ENCODE measurements at regions of chr11 and their contacts with region 1.

Region 1: GRCh38 chr11:59263225-59263894 is 50.6 kb upstream of the MPEG1 start:
- DNase-seq: peak; percentile 49 to 54
- H3K4me3 ChIP-seq: no peak overlapping the region
- H3K4me3 Mint-ChIP-seq: no peak overlapping the region
- H3K27ac Mint-ChIP-seq: no peak overlapping the region
- H3K4me1 ChIP-seq: no peaks in the 10 kb centered on the region
- H3K4me1 Mint-ChIP-seq: no peaks in the 10 kb centered on the region
- H3K27me3 ChIP-seq: no peaks in the 10 kb centered on the region
- H3K27me3 Mint-ChIP-seq: peaks cover 3% of the 10 kb centered on the region
- CTCF ChIP-seq: peak; percentile 51 to 70

Region 2: DNA sequence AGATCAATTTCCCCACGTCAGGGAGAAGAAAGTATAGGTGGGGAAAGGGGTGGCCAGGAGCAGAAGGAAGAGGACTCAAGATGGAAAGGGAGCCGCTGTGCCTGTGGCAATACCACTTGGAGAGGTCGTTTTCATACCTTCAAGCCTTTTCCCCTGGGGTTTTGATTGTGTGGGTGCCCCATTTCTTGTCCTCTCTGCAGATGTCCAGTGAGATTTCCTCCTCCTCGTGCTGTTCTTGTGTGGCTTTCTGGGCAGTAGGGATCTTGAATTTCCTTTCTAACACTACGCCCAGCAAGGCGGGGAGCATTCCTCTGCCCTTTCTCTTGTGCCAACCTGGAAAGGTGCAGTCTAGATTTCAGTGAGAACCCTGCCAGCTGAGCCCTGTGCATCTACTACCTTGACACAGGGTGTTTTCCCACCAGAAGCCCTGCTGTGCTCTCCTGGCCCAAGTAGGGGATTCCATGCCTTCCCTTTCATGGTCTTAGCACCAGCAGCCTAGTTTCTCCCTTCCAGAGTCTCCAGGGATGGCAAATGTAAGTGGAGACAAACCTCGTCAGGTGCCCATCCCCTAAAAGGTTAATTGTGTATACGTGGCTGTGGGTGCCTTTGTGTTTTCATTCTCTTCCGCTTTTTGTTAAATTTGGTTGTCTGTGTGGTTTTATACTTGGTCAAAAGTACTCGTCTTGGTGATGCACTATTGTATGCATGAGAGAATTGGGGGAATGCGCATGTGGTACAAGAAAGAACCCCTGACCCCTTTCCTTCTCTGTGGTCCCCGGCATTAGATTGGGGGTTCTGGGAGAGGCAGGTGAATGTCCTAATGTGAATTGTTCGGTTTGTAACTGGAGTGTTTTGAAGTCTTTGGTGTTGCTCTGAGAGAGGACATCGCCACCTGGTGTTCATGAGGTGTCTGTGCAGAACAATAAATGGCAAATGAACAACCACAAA is 20.7 kb after region 1 on chr11:
- CTCF ChIA-PET with region 1: no interaction called
- POLR2A ChIA-PET with region 1: no interaction called
- intact Hi-C with region 1: loop called (anchors 1 kb)
- DNase-seq: peak in 1 of 2 experiments; percentile 47
- H3K4me3 ChIP-seq: no peak overlapping the region
- H3K4me3 Mint-ChIP-seq: no peak overlapping the region
- H3K27ac Mint-ChIP-seq: no peak overlapping the region
- H3K4me1 ChIP-seq: no peaks in the 10 kb centered on the region
- H3K4me1 Mint-ChIP-seq: no peaks in the 10 kb centered on the region
- H3K27me3 ChIP-seq: no peaks in the 10 kb centered on the region
- H3K27me3 Mint-ChIP-seq: peaks cover 5% of the 10 kb centered on the region
- CTCF ChIP-seq: peak; percentile 84 to 88

Region 3: GRCh38 chr11:59429924-59430516 is 166.7 kb after region 1 on chr11:
- CTCF ChIA-PET with region 1: no interaction called
- POLR2A ChIA-PET with region 1: no interaction called
- intact Hi-C with region 1: loop called (anchors 1 kb)
- DNase-seq: peak; percentile 46 to 68
- H3K4me3 ChIP-seq: no peak overlapping the region
- H3K4me3 Mint-ChIP-seq: no peak overlapping the region
- H3K27ac Mint-ChIP-seq: no peak overlapping the region
- H3K4me1 ChIP-seq: no peaks in the 10 kb centered on the region
- H3K4me1 Mint-ChIP-seq: no peaks in the 10 kb centered on the region
- H3K27me3 ChIP-seq: no peaks in the 10 kb centered on the region
- H3K27me3 Mint-ChIP-seq: peaks cover 3% of the 10 kb centered on the region
- CTCF ChIP-seq: peak; percentile 68 to 74